ENCODE measurements at regions of chr22 and their contacts with region 1.

Region 1: GRCh38 chr22:40636380-40637182 is at the start of gene MRTFA:
- DNase-seq: peak; percentile 100
- ATAC-seq: peak; percentile 98
- H3K4me3 ChIP-seq: peak within 1 kb of the TSS; percentile 81
- H3K27ac ChIP-seq: peak within 1 kb of the TSS; percentile 86
- H3K4me1 ChIP-seq: peaks cover 4% of the 10 kb centered on the region
- H3K27me3 ChIP-seq: no peaks in the 10 kb centered on the region
- total RNA-seq, gene MRTFA: 29.3 to 40.2 (median 31.8) TPM

Region 2: GRCh38 chr22:39999144-39999757 is 637.3 kb before region 1 on chr22:
- intact Hi-C with region 1: no loop called
- DNase-seq: no peak
- ATAC-seq: no peak
- H3K4me3 ChIP-seq: no peak overlapping the region
- H3K27ac ChIP-seq: no peak overlapping the region
- H3K4me1 ChIP-seq: peaks cover 6% of the 10 kb centered on the region
- H3K27me3 ChIP-seq: no peaks in the 10 kb centered on the region

Region 3: GRCh38 chr22:40443732-40444131 is 192.8 kb before region 1 on chr22:
- intact Hi-C with region 1: no loop called
- DNase-seq: peak; percentile 80 to 89 (median 81)
- ATAC-seq: peak; percentile 92
- H3K4me3 ChIP-seq: no peak overlapping the region
- H3K27ac ChIP-seq: peak overlapping the region; percentile 43
- H3K4me1 ChIP-seq: peaks cover 6% of the 10 kb centered on the region
- H3K27me3 ChIP-seq: no peaks in the 10 kb centered on the region

Region 4: GRCh38 chr22:40509401-40510134 is 127.0 kb before region 1 on chr22:
- intact Hi-C with region 1: loop called in 1 of 4 experiments (anchors 5 kb)
- DNase-seq: peak; percentile 67 to 87 (median 70)
- ATAC-seq: peak; percentile 75 to 83
- H3K4me3 ChIP-seq: no peak overlapping the region
- H3K27ac ChIP-seq: no peak overlapping the region
- H3K4me1 ChIP-seq: peaks cover 2% of the 10 kb centered on the region
- H3K27me3 ChIP-seq: no peaks in the 10 kb centered on the region

Region 5: DNA sequence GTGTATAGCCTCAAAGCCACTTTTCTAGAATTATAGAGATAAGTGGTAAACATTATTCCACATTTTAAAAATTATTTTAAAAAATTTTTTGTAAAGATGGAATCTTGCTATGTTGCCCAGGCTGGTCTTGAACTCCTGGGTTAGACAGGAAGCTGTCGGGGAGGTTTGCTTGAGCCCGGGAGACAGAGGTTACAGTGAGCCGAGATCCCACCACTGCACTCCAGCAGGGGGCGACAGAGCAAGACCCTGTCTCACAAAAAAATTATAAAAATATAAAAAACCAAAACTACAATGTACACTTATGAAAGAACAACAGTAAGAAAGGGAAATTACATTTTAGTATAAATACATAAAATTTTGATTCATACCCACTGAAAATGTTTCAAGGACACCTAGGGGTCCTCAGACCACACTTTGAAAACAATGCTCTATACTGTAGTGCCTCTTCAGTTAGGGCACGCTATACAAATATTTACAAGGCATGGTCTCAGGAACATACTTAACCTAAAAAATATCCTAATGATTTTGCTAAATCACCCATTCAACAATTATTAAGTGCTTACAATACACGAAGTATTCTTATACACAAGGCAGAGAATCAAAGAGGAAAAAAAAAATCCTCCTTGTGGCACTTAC is 111.2 kb before region 1 on chr22:
- intact Hi-C with region 1: loop called in 1 of 4 experiments (anchors 10 kb)
- DNase-seq: peak in 2 of 3 donors; percentile 69 to 83
- ATAC-seq: no peak
- H3K4me3 ChIP-seq: no peak overlapping the region
- H3K27ac ChIP-seq: no peak overlapping the region
- H3K4me1 ChIP-seq: no peaks in the 10 kb centered on the region
- H3K27me3 ChIP-seq: no peaks in the 10 kb centered on the region

Region 6: DNA sequence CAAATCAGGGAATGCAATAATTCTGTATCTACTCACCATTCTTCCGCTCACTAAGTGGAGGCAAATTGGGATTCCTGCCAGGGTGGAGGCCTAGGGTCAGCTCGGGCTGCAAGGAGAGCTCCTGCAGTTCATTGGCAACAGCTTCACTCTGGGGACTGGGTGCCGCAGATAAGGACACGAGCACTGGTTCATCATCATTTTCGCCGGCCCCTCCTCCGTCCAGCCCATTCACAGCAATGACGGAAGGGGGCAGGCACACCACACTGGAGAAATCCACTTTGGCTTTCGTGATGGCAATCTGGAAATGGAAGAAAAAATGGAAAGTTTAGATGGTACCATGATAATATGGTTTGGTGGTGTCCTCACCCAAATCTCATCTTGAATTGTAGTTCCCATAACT is 84.5 kb before region 1 on chr22:
- intact Hi-C with region 1: loop called in 2 of 4 experiments (anchors 10 kb)
- DNase-seq: peak; percentile 74 to 89 (median 89)
- ATAC-seq: peak; percentile 91 to 93
- H3K4me3 ChIP-seq: no peak overlapping the region
- H3K27ac ChIP-seq: no peak overlapping the region
- H3K4me1 ChIP-seq: no peaks in the 10 kb centered on the region
- H3K27me3 ChIP-seq: no peaks in the 10 kb centered on the region

Region 7: GRCh38 chr22:40890881-40891280 is 254.3 kb after region 1 on chr22:
- intact Hi-C with region 1: no loop called
- DNase-seq: no peak
- ATAC-seq: no peak
- H3K4me3 ChIP-seq: no peak overlapping the region
- H3K27ac ChIP-seq: no peak overlapping the region
- H3K4me1 ChIP-seq: peaks cover 3% of the 10 kb centered on the region
- H3K27me3 ChIP-seq: no peaks in the 10 kb centered on the region

Region 8: GRCh38 chr22:40982482-40983385 is 346.2 kb after region 1 on chr22:
- intact Hi-C with region 1: no loop called
- DNase-seq: no peak
- ATAC-seq: peak; percentile 31 to 42
- H3K4me3 ChIP-seq: no peak overlapping the region
- H3K27ac ChIP-seq: no peak overlapping the region
- H3K4me1 ChIP-seq: no peaks in the 10 kb centered on the region
- H3K27me3 ChIP-seq: no peaks in the 10 kb centered on the region